ENCODE measurements at regions of chr5 and their contacts with region 1.

Region 1: DNA sequence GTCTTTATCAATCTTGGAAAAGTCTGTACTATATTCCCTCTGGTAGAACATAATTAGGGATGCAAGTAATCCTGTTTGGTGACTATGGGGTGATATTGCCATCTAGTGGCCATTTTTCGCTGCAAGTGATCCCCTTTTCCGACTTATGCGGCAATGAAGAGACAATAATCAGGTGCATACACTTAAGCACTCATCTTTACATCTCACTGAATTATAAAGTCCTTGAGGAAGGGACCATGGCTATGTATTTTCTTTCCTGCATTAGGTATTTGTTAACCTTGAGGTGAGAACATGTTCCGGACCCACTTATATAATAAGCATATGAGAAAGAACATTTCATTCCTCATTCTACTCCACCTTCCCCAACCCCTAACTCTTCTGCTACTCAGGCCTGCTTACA is 19.6 kb upstream of the LIX1 start:
- DNase-seq: peak; percentile 20
- H3K4me3 Mint-ChIP-seq: no peak overlapping the region
- H3K27ac Mint-ChIP-seq: no peak overlapping the region
- H3K4me1 Mint-ChIP-seq: no peaks in the 10 kb centered on the region
- H3K27me3 Mint-ChIP-seq: peaks cover 2% of the 10 kb centered on the region

Region 2: DNA sequence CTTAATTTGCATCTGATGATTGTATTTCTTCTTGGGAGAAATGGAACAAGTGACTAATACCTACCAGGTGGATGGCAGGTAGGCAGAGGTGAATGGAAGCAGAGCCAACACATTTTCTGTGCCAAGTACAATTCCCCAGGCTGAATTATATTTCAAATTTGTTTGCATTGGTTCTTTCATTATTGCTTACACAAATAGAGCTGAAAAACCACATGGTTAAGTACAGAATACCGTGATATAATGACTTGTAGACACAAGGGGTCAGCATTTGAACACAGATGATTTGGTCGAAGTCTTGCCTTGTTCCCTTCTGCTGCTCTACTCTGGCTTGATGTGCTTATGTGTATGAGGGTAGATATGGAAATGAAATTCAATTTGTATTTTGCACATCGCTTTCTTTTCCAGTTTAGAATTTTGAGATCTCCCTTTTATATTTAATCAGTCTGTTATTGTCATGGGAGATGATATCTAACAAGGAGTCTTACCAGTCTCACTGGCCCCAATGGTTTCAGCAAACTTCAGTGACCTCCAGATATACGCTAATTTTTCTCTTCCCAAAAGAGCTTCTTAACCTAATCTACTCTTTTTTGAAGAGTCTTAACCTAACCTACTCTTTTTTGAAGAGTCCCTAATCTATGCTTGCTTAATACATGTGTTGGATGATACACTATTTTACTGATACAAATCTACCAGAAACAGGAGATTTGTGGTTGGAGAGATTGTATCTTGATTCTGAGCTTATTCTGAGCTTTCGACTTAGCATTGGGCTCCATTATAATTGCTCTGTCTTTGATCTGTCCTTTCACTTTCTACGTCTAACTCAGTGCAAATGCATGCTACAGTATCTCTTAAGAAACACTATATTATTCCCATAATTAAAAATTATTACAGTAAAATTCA is 817.1 kb before region 1 on chr5:
- intact Hi-C with region 1: loop called (anchors 10 kb)
- DNase-seq: no peak
- H3K4me3 Mint-ChIP-seq: no peak overlapping the region
- H3K27ac Mint-ChIP-seq: peak overlapping the region; percentile 1
- H3K4me1 Mint-ChIP-seq: peaks cover 22% of the 10 kb centered on the region
- H3K27me3 Mint-ChIP-seq: peaks cover 35% of the 10 kb centered on the region

Region 3: GRCh38 chr5:96752341-96753016 is 409.6 kb before region 1 on chr5:
- intact Hi-C with region 1: loop called (anchors 1 kb)
- DNase-seq: no peak
- H3K4me3 Mint-ChIP-seq: no peak overlapping the region
- H3K27ac Mint-ChIP-seq: no peak overlapping the region
- H3K4me1 Mint-ChIP-seq: peaks cover 5% of the 10 kb centered on the region
- H3K27me3 Mint-ChIP-seq: no peaks in the 10 kb centered on the region

Region 4: DNA sequence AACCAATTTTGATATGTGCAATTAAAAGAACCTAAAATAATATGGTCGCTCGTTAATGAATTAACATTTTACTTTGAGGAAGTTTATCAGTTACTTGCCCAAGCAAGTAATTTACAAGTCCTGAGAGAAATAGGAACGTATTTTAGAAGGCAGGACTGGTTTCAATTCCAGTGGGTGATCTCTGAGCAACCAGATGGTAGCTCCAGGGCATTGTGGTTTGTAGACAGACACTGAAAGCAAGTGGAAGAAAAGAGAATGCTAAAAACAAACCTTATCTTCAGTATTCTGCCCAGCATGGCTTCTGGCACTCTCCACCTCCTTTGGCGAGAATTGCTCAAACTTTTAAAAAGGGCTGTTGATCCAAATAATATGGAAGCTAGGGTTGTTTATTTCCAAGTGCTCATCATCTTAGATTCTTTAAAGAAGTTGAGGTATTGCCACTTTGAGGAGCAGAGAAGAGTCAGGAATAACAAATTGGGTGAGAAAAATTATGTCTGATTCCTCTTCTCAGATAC is 317.5 kb before region 1 on chr5:
- intact Hi-C with region 1: no loop called
- DNase-seq: no peak
- H3K4me3 Mint-ChIP-seq: no peak overlapping the region
- H3K27ac Mint-ChIP-seq: no peak overlapping the region
- H3K4me1 Mint-ChIP-seq: peaks cover 28% of the 10 kb centered on the region
- H3K27me3 Mint-ChIP-seq: peaks cover 8% of the 10 kb centered on the region

Region 5: GRCh38 chr5:96984506-96985192 is 177.4 kb before region 1 on chr5:
- intact Hi-C with region 1: no loop called
- DNase-seq: no peak
- H3K4me3 Mint-ChIP-seq: no peak overlapping the region
- H3K27ac Mint-ChIP-seq: no peak overlapping the region
- H3K4me1 Mint-ChIP-seq: peaks cover 29% of the 10 kb centered on the region
- H3K27me3 Mint-ChIP-seq: no peaks in the 10 kb centered on the region

Region 6: GRCh38 chr5:96997265-96997859 is 164.7 kb before region 1 on chr5:
- intact Hi-C with region 1: loop called (anchors 1 kb)
- DNase-seq: no peak
- H3K4me3 Mint-ChIP-seq: no peak overlapping the region
- H3K27ac Mint-ChIP-seq: no peak overlapping the region
- H3K4me1 Mint-ChIP-seq: peaks cover 35% of the 10 kb centered on the region
- H3K27me3 Mint-ChIP-seq: no peaks in the 10 kb centered on the region

Region 7: GRCh38 chr5:97183100-97183929 is 21.3 kb after region 1 on chr5 and contains the start of gene RIOK2:
- intact Hi-C with region 1: loop called (anchors 1 kb)
- DNase-seq: peak; percentile 86
- H3K4me3 Mint-ChIP-seq: peak within 1 kb of the TSS; percentile 91
- H3K27ac Mint-ChIP-seq: peak within 1 kb of the TSS; percentile 100
- H3K4me1 Mint-ChIP-seq: peaks cover 42% of the 10 kb centered on the region
- H3K27me3 Mint-ChIP-seq: peaks cover 9% of the 10 kb centered on the region
- total RNA-seq, gene RIOK2: 37.2 and 47.2 TPM in 2 replicates